ENCODE measurements at regions of chr3 and their contacts with region 1.

Region 1: GRCh38 chr3:172039436-172040077 is at the start of gene FNDC3B:
- DNase-seq: peak; percentile 59
- ATAC-seq: peak; percentile 82
- H3K4me3 ChIP-seq: peak within 1 kb of the TSS; percentile 91
- H3K27ac ChIP-seq: peak within 1 kb of the TSS; percentile 93
- H3K4me1 ChIP-seq: peaks cover 24% of the 10 kb centered on the region
- H3K27me3 ChIP-seq: no peaks in the 10 kb centered on the region
- CTCF ChIP-seq: no peak
- EP300 ChIP-seq: 0 out of 4 replicates have a peak, but pooled peaks of 1 of the 2 experiments have one; percentile 14
- POLR2A ChIP-seq: peak; percentile 90
- RAD21 ChIP-seq: peak; percentile 41; the same call in 1 of the 2 replicates
- polyA plus RNA-seq, gene FNDC3B: 7.9 to 11.9 TPM

Region 2: DNA sequence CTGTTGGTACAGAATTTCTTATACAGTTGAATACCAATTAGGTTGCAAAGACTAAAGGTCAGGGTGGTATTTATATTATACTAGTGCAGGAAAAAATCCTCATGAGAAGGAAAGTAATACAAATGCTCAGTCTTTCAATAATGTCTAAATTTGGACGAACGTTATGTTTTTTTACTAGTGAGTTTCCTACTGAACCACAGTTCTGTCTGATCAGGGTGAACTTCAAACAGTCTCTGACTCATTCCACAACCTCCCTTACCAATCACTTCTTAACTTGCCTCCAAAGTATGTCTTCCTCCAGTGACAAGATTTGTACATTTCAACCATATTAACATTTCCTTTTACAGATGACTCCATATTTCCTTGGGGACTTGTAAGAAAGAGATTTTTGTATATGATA is 193.0 kb before region 1 on chr3:
- CTCF ChIA-PET with region 1: no interaction called
- POLR2A ChIA-PET with region 1: no interaction called
- RAD21 ChIA-PET with region 1: no interaction called
- SMC1A ChIA-PET with region 1: no interaction called
- in situ Hi-C with region 1: no loop called
- intact Hi-C with region 1: loop called (anchors 10 kb)
- DNase-seq: peak; percentile 80
- ATAC-seq: peak; percentile 97
- H3K4me3 ChIP-seq: no peak overlapping the region
- H3K27ac ChIP-seq: no peak overlapping the region
- H3K4me1 ChIP-seq: peaks cover 13% of the 10 kb centered on the region
- H3K27me3 ChIP-seq: no peaks in the 10 kb centered on the region
- CTCF ChIP-seq: no peak
- EP300 ChIP-seq: peak; percentile 57 to 78; a peak in 2 of 4 replicates
- POLR2A ChIP-seq: no peak
- RAD21 ChIP-seq: no peak

Region 3: GRCh38 chr3:172054115-172054764 is 14.7 kb after region 1 on chr3:
- CTCF ChIA-PET with region 1: interaction called, 5 read pairs
- POLR2A ChIA-PET with region 1: interaction called, 9 read pairs
- RAD21 ChIA-PET with region 1: interaction called, 12 read pairs
- SMC1A ChIA-PET with region 1: interaction called, 39 read pairs
- in situ Hi-C with region 1: no loop called
- intact Hi-C with region 1: no loop called
- DNase-seq: no peak
- ATAC-seq: peak; percentile 29
- H3K4me3 ChIP-seq: no peak overlapping the region
- H3K27ac ChIP-seq: no peak overlapping the region
- H3K4me1 ChIP-seq: peaks cover 12% of the 10 kb centered on the region
- H3K27me3 ChIP-seq: no peaks in the 10 kb centered on the region
- CTCF ChIP-seq: no peak
- EP300 ChIP-seq: no peak
- POLR2A ChIP-seq: no peak
- RAD21 ChIP-seq: no peak

Region 4: GRCh38 chr3:172129870-172130683 is 90.5 kb after region 1 on chr3:
- CTCF ChIA-PET with region 1: interaction called, 9 read pairs
- POLR2A ChIA-PET with region 1: interaction called, 6 read pairs
- RAD21 ChIA-PET with region 1: interaction called, 28 read pairs
- SMC1A ChIA-PET with region 1: interaction called, 8 read pairs
- in situ Hi-C with region 1: no loop called
- intact Hi-C with region 1: loop called (anchors 5 kb)
- DNase-seq: no peak
- ATAC-seq: peak; percentile 12; the same call in 1 of the 3 replicates
- H3K4me3 ChIP-seq: no peak overlapping the region
- H3K27ac ChIP-seq: no peak overlapping the region
- H3K4me1 ChIP-seq: peaks cover 29% of the 10 kb centered on the region
- H3K27me3 ChIP-seq: no peaks in the 10 kb centered on the region
- CTCF ChIP-seq: no peak
- EP300 ChIP-seq: no peak
- POLR2A ChIP-seq: no peak
- RAD21 ChIP-seq: no peak

Region 5: DNA sequence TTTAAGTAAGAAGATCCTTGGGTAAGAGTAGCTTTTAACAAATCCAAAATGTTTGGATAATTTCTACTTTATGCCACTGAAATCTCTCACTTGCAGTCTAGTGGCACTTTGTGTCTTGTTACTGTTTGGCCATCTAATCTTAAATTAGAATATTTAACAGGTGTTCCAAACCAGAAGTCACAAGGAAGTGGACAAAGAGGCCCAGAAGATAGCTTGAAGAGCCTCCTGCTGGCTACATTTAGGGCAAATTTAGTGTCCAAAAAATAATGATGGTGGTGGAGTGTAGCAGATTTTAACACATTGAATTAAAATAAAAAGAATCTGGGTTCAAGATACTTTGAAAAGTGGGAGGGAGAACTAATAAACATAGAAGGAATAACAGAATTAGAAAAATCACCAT is 236.5 kb after region 1 on chr3:
- CTCF ChIA-PET with region 1: interaction called, 11 read pairs
- POLR2A ChIA-PET with region 1: no interaction called
- RAD21 ChIA-PET with region 1: interaction called, 7 read pairs
- SMC1A ChIA-PET with region 1: interaction called, 6 read pairs
- in situ Hi-C with region 1: no loop called
- intact Hi-C with region 1: loop called (anchors 5 kb)
- DNase-seq: no peak
- ATAC-seq: peak; percentile 36; the same call in 1 of the 3 replicates
- H3K4me3 ChIP-seq: no peak overlapping the region
- H3K27ac ChIP-seq: no peak overlapping the region
- H3K4me1 ChIP-seq: peaks cover 12% of the 10 kb centered on the region
- H3K27me3 ChIP-seq: no peaks in the 10 kb centered on the region
- CTCF ChIP-seq: peak in 2 of 3 experiments; percentile 15 to 33; a peak in 4 of 6 replicates
- EP300 ChIP-seq: no peak
- POLR2A ChIP-seq: no peak
- RAD21 ChIP-seq: peak; percentile 61

Measured in GM12878 (cell line).